MCF 10A (cell line): ENCODE measurements at regions of chr9 and their contacts with region 1.

Region 1: DNA sequence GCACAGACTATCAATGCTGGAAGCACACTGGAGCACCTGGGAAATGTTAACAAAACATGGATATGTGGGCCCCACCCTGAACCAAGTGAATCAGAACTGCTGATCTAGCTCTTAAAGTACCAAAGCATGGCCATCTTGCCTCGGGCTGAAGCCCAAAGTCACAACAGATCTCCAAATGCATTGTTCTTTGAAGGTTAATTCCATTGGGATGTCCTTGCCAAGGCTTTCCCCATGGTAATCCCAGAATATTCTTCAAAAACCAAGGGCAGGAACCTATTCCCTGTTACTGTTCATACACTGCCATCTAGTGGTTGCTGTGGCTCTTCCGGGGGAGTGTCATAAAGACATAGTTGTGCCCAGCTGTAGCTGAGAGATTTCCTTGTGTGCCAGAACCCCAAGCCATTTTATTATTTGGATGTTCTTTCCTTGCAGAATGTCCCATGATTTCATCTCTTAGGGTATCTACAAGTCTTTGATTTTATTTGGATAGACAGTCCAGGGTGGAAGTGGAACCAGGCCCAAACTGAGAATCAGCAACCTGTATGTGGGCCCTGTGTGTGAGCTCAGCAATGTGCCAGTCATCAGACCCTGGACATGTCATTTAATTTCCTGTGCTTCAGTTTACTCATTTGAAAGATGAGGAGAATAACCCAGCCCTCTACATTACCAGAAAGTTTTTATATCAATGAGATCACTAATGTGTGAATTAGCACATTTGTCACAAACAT is 290.0 kb downstream of the ACTL7B start:
- DNase-seq: peak; percentile 92
- H3K4me3 Mint-ChIP-seq: no peak overlapping the region
- H3K27ac Mint-ChIP-seq: peak overlapping the region; percentile 29
- H3K4me1 Mint-ChIP-seq: peaks cover 56% of the 10 kb centered on the region
- H3K27me3 Mint-ChIP-seq: no peaks in the 10 kb centered on the region
- CTCF ChIP-seq: peak; percentile 75

Region 2: GRCh38 chr9:107421947-107422793 is 1143.6 kb before region 1 on chr9:
- CTCF ChIA-PET with region 1: interaction called, 8 read pairs
- POLR2A ChIA-PET with region 1: interaction called, 4 read pairs
- intact Hi-C with region 1: loop called (anchors 1 kb)
- DNase-seq: peak; percentile 87
- H3K4me3 Mint-ChIP-seq: no peak overlapping the region
- H3K27ac Mint-ChIP-seq: no peak overlapping the region
- H3K4me1 Mint-ChIP-seq: peaks cover 11% of the 10 kb centered on the region
- H3K27me3 Mint-ChIP-seq: no peaks in the 10 kb centered on the region
- CTCF ChIP-seq: peak; percentile 56

Region 3: GRCh38 chr9:107489687-107490605 is 1075.9 kb before region 1 on chr9 and contains the start of gene KLF4:
- CTCF ChIA-PET with region 1: interaction called, 5 read pairs
- POLR2A ChIA-PET with region 1: interaction called, 37 read pairs
- intact Hi-C with region 1: no loop called
- DNase-seq: peak; percentile 95
- H3K4me3 Mint-ChIP-seq: peak within 1 kb of the TSS; percentile 94
- H3K27ac Mint-ChIP-seq: peak within 1 kb of the TSS; percentile 96
- H3K4me1 Mint-ChIP-seq: peaks cover 18% of the 10 kb centered on the region
- H3K27me3 Mint-ChIP-seq: no peaks in the 10 kb centered on the region
- CTCF ChIP-seq: no peak
- total RNA-seq, gene KLF4: 94.9 and 96.0 TPM in 2 replicates

Region 4: DNA sequence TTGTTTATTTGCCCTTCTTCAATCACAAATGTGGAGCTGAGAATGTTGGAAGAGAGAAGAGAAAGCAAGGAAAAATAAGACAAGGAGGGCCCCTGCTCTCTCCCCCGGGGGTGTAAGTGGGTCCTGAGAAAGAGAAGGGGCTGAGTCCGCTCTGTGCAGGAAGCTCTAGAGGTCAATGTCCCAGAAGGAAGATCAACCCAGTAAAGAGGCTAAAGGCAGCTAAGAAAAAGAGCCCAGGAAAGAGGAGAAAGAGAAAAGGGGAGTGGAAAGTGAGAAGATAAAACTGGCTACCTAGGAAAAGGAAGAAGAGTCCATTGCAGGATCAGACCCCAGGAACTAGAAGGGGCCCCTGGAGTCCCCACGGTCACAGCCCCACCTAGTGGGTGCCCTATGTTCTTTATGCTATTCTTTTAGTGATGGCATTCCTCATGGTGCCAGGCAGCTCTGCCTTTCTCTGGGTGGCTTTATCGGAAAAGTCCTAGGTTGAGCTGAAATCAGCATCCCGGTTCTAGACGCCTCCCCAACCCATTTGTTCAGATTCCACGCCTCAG is 293.4 kb before region 1 on chr9:
- CTCF ChIA-PET with region 1: interaction called, 14 read pairs
- POLR2A ChIA-PET with region 1: no interaction called
- intact Hi-C with region 1: loop called (anchors 1 kb)
- DNase-seq: peak; percentile 73
- H3K4me3 Mint-ChIP-seq: peak overlapping the region; percentile 52
- H3K27ac Mint-ChIP-seq: peak overlapping the region; percentile 93
- H3K4me1 Mint-ChIP-seq: peaks cover 30% of the 10 kb centered on the region
- H3K27me3 Mint-ChIP-seq: no peaks in the 10 kb centered on the region
- CTCF ChIP-seq: peak; percentile 79

Region 5: GRCh38 chr9:108478431-108478837 is 87.4 kb before region 1 on chr9:
- CTCF ChIA-PET with region 1: interaction called, 10 read pairs
- POLR2A ChIA-PET with region 1: interaction called, 18 read pairs
- intact Hi-C with region 1: no loop called
- DNase-seq: peak; percentile 97
- H3K4me3 Mint-ChIP-seq: peak overlapping the region; percentile 37
- H3K27ac Mint-ChIP-seq: peak overlapping the region; percentile 89
- H3K4me1 Mint-ChIP-seq: peaks cover 47% of the 10 kb centered on the region
- H3K27me3 Mint-ChIP-seq: no peaks in the 10 kb centered on the region
- CTCF ChIP-seq: no peak

Region 6: GRCh38 chr9:108591121-108591520 is 25.3 kb after region 1 on chr9:
- CTCF ChIA-PET with region 1: no interaction called
- POLR2A ChIA-PET with region 1: no interaction called
- intact Hi-C with region 1: no loop called
- DNase-seq: no peak
- H3K4me3 Mint-ChIP-seq: no peak overlapping the region
- H3K27ac Mint-ChIP-seq: no peak overlapping the region
- H3K4me1 Mint-ChIP-seq: peaks cover 5% of the 10 kb centered on the region
- H3K27me3 Mint-ChIP-seq: peaks cover 11% of the 10 kb centered on the region
- CTCF ChIP-seq: no peak

Region 7: GRCh38 chr9:108671176-108671575 is 105.4 kb after region 1 on chr9:
- CTCF ChIA-PET with region 1: interaction called, 14 read pairs
- POLR2A ChIA-PET with region 1: interaction called, 7 read pairs
- intact Hi-C with region 1: loop called (anchors 1 kb)
- DNase-seq: peak; percentile 64
- H3K4me3 Mint-ChIP-seq: no peak overlapping the region
- H3K27ac Mint-ChIP-seq: peak overlapping the region; percentile 44
- H3K4me1 Mint-ChIP-seq: peaks cover 58% of the 10 kb centered on the region
- H3K27me3 Mint-ChIP-seq: no peaks in the 10 kb centered on the region
- CTCF ChIP-seq: peak; percentile 86